Dendritic cell treated with granulocyte-macrophage colony-stimulating factor and Interleukin-4, amounts not matched to agents 40 ng/mL and 50 ng/mL, for 4 days (primary cell): ENCODE measurements at regions of chr20 and their contacts with region 1.

Region 1: GRCh38 chr20:25178563-25179438 is 16.7 kb upstream of the ENTPD6 start:
- H3K4me3 Mint-ChIP-seq: no peak overlapping the region
- H3K27ac Mint-ChIP-seq: no peak overlapping the region
- H3K4me1 Mint-ChIP-seq: no peaks in the 10 kb centered on the region
- H3K27me3 Mint-ChIP-seq: peaks cover 7% of the 10 kb centered on the region

Region 2: GRCh38 chr20:25076731-25077609 is 101.8 kb before region 1 on chr20:
- intact Hi-C with region 1: loop called (anchors 10 kb)
- H3K4me3 Mint-ChIP-seq: no peak overlapping the region
- H3K27ac Mint-ChIP-seq: no peak overlapping the region
- H3K4me1 Mint-ChIP-seq: peaks cover 7% of the 10 kb centered on the region
- H3K27me3 Mint-ChIP-seq: peaks cover 66% of the 10 kb centered on the region

Region 3: DNA sequence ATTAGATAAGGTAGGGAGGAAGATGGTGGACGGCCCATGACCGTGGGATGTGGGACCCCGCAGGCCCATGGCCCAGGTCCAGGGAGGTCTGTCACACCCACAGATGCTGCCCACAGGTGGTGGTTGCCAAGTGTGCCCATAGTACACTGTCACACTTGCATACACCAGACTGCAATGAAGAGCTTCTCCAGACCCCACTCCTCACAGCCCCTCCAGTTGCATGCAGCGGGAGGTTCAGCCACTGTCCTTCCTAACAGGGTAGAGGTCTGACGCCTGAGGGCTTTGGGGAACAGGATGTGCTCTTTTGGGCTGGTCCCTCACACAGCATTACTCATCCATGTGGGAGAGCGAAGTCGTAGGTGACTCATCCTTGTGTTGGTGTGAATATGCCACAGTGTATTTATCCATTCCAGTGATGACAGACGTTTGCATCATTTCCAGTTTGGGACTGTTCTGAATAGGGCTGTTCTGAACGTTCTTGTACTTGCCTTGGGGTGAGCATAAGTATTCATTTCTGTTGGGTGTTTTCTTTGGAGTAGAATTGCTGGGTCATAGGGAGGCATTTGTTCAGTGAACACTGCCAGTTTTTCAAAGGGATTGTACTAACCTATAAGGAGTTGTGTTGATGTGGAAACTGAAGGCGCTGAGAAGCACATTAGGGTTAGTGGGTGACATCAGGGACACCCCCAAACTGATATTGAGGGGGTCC is 59.0 kb after region 1 on chr20:
- intact Hi-C with region 1: no loop called
- H3K4me3 Mint-ChIP-seq: no peak overlapping the region
- H3K27ac Mint-ChIP-seq: peak overlapping the region; percentile 85
- H3K4me1 Mint-ChIP-seq: peaks cover 56% of the 10 kb centered on the region
- H3K27me3 Mint-ChIP-seq: peaks cover 18% of the 10 kb centered on the region

Region 4: DNA sequence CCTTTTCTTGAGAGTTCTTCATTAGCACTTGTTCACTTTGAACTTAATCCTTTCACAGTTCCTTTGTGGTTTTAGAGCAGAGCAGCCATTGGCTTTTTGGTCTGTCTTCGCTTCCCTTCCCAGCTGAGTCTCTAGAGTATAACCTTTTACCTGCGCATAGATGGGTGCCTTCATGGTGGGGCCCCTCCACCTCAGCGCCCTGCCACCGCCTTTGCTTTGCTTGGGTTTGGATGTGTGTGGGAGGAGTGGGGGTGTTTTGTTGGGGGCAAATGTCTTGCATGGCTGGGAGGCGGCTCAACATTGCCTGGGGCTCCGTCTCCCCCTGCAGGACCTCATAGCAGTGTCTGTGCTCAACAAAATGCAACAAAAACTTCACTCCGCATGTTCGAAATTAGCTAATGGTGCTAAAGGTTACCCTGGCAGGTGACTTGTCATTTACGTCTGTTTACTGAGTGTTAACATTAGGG is 81.0 kb after region 1 on chr20:
- intact Hi-C with region 1: no loop called
- H3K4me3 Mint-ChIP-seq: no peak overlapping the region
- H3K27ac Mint-ChIP-seq: no peak overlapping the region
- H3K4me1 Mint-ChIP-seq: peaks cover 17% of the 10 kb centered on the region
- H3K27me3 Mint-ChIP-seq: no peaks in the 10 kb centered on the region

Region 5: DNA sequence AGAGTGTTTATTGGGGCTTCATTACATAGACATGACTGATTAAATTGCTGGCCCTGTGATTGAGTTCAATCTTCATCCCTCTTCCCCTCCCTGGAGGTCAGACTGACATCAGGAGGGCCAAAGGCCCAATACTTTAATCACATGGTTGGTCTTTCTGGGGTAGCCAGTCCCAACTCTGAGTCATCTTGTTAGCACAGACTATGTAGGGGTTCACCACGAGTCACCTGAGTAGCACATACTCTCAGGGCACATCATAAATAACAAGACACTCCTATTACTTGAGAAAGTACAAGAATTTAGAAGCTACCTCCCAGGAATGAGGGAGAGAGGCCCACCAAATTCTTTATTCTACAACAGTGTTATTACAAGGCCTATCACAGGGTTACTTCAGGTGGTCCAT is 240.0 kb after region 1 on chr20:
- intact Hi-C with region 1: no loop called
- H3K4me3 Mint-ChIP-seq: no peak overlapping the region
- H3K27ac Mint-ChIP-seq: no peak overlapping the region
- H3K4me1 Mint-ChIP-seq: no peaks in the 10 kb centered on the region
- H3K27me3 Mint-ChIP-seq: no peaks in the 10 kb centered on the region